Ascending aorta (tissue), 2 donors: ENCODE measurements at regions of chr2 and their contacts with region 1.

Region 1: GRCh38 chr2:95165129-95166064 is at the start of gene ZNF2:
- DNase-seq: peak; percentile 92 to 99
- H3K4me3 ChIP-seq: peak within 1 kb of the TSS; percentile 72 to 79
- H3K27ac ChIP-seq: peak within 1 kb of the TSS; percentile 81 to 85
- H3K4me1 ChIP-seq: peaks cover 5 to 11% of the 10 kb centered on the region in 2 donors
- H3K27me3 ChIP-seq: no peaks in the 10 kb centered on the region
- CTCF ChIP-seq: no peak
- total RNA-seq, gene ZNF2: 0.75 TPM

Region 2: DNA sequence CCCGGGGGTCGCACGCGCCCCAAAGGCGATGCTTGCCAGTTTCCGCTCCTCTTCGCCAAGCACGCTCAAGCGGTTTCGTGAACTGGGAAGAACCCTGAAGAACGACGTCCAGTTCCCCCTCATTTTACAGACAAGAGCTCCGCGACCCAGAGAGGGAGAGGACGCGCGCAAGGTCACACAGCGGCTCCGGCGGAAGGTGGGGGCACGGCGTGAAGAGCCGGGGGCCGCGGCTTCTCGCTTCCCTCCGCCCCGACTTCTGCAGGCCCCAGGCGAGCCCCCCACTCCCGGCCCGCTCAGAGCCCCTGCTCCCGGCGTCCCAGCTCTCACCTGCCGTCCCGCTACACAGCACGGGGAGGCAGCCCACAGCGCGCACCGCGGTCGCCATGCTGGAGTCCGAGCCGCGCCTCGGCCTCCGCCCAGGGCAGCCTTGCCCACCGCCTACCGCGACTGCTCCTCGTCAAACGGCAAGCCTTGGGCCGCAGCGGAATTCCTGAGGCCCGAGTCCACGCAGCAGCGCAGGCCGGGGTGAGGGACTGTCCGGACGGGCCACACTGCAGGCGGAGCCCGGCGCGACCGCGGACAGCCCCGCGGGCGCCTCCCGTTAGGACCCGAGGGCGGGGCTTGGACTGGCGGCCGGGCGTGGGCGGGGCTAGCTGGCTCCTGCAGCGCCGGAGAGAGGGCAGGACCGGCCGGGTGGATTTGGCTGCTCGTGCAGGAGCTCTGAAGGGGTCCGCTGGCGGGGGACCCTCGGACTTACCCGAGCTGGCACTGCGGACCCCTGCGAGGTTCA is 43.8 kb before region 1 on chr2 and contains the start of gene MRPS5:
- intact Hi-C with region 1: loop called (anchors 1 kb)
- DNase-seq: peak; percentile 26 to 89
- H3K4me3 ChIP-seq: peak within 1 kb of the TSS; percentile 87 to 99
- H3K27ac ChIP-seq: peak within 1 kb of the TSS; percentile 94 to 98
- H3K4me1 ChIP-seq: peaks cover 9 to 13% of the 10 kb centered on the region in 2 donors
- H3K27me3 ChIP-seq: no peaks in the 10 kb centered on the region
- CTCF ChIP-seq: peak in 2 of 3 experiments; percentile 18 to 28
- total RNA-seq, gene MRPS5: 30.1 TPM

Region 3: GRCh38 chr2:95207111-95207961 is 41.9 kb after region 1 on chr2 and contains the start of gene ZNF892:
- intact Hi-C with region 1: loop called (anchors 2 kb)
- DNase-seq: peak; percentile 38 to 94
- H3K4me3 ChIP-seq: peak within 1 kb of the TSS; percentile 52 to 89
- H3K27ac ChIP-seq: peak within 1 kb of the TSS; percentile 89 to 94
- H3K4me1 ChIP-seq: no peaks in the 10 kb centered on the region
- H3K27me3 ChIP-seq: no peaks in the 10 kb centered on the region
- CTCF ChIP-seq: peak in 2 of 3 experiments; percentile 44 to 59
- total RNA-seq, gene ZNF892: 1.4 TPM

Region 4: DNA sequence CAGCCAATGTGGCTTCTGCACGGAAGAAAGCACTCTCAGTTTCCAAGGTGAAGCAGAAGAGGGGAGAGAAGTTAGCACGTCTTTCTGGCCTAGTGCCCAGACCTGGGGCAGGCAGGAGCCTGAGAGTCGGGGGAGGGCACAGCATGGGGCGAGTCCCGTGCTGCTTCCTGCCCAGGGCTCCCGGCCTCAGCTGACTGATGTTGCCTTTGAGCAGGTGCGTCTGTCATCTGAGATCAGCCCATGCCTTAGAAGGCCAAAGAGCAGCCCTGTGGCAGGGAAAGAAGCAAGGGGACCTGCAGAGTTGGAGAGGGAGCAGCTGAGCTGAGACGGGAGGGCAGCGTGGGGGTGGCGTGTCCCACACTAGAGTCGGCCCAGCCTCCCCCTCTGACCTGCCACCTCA is 135.1 kb after region 1 on chr2:
- intact Hi-C with region 1: no loop called
- DNase-seq: no peak
- H3K4me3 ChIP-seq: no peak overlapping the region
- H3K27ac ChIP-seq: no peak overlapping the region
- H3K4me1 ChIP-seq: peaks cover 0 to 4% of the 10 kb centered on the region in 2 donors
- H3K27me3 ChIP-seq: no peaks in the 10 kb centered on the region
- CTCF ChIP-seq: no peak

Region 5: DNA sequence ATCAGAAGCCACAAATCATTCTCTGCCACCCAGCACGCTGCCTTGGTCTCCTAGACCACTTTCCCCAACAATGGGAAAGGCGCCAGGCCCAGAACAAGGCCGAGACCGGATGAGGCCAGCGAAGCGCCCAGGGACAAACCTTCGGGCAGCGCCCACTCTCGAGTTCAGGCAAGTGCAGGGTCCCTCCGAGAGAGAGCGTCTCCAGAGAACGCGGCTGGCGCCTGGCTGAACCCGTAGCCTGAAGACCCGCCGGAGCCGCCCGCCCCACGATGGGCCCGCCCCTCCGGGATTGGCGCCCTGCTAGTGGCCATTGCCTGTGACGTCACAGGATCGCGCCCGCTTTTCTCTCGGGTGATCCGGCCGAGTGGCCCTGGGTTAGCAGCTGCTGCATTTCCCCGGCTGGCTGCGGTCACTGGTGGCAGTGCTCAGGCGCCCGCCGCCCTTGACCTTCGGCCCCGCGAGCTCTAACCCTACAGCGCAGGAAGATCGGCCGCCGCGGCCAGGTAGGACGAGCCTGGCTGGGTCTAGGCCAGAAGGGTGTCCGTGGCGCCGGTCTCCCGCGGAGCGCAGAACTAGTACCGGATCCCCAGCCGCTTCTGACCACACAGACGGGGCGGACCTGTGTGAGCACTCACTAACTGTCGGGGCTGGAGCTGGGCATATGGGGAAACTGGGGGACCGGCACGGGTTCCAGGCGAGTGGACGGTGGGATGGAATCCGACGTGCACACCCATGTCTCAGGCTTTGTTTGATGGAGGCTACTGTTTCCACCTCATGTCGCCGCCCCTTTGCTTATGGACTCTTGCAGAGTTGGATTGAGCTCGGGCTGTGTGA is 237.2 kb after region 1 on chr2 and contains the start of gene FAHD2A:
- intact Hi-C with region 1: loop called (anchors 1 kb)
- DNase-seq: peak; percentile 83 to 98
- H3K4me3 ChIP-seq: peak within 1 kb of the TSS; percentile 81 to 94
- H3K27ac ChIP-seq: peak within 1 kb of the TSS; percentile 68 to 86
- H3K4me1 ChIP-seq: peaks cover 0 to 7% of the 10 kb centered on the region in 2 donors
- H3K27me3 ChIP-seq: no peaks in the 10 kb centered on the region
- CTCF ChIP-seq: no peak
- total RNA-seq, gene FAHD2A: 54.0 TPM